Right cardiac atrium (tissue), 5 donors: ENCODE measurements at regions of chr22 and their contacts with region 1.

Region 1: DNA sequence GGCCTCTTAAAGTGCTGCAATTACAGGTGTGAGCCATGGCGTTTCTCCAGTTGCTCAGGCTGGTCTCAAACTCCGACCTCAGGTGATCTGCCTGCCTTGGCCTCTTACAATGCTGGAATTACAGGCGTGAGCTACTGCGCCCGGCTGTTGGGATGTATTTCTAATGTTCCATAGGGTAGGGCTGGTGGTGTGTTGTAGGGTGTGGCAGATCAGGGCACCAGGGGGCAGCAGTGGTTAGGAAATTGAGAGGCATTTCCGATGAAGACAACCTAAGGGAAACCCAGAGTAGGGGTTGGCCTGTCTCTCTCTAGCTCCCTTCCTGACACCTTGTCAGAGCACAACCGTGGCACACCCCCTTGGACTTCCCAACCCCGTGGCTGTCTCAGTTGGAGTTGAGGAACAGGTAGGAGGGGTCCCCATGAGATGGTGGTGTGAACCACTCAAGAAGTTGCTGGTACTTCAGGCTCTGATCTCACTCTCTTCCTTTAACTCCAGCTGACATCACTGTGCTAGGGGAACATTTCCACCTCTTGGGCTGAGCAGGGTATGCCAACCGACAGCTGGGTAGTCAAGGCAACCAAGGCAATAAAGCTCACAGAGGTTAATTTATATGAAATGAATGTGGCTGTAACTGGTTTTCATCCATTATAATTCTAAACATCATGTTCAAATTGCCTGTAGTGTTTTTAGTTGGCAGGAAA is 33.0 kb downstream of the YWHAH start:
- DNase-seq: peak; percentile 70 to 92 (median 85)
- ATAC-seq: peak; percentile 87
- H3K4me3 ChIP-seq: no peak overlapping the region
- H3K27ac ChIP-seq: no peak overlapping the region
- H3K4me1 ChIP-seq: no peaks in the 10 kb centered on the region
- H3K27me3 ChIP-seq: no peaks in the 10 kb centered on the region

Region 2: GRCh38 chr22:31829505-31829904 is 147.8 kb before region 1 on chr22:
- intact Hi-C with region 1: no loop called
- DNase-seq: no peak
- ATAC-seq: peak; percentile 36 to 82
- H3K4me3 ChIP-seq: no peak overlapping the region
- H3K27ac ChIP-seq: no peak overlapping the region
- H3K4me1 ChIP-seq: no peaks in the 10 kb centered on the region
- H3K27me3 ChIP-seq: no peaks in the 10 kb centered on the region

Region 3: DNA sequence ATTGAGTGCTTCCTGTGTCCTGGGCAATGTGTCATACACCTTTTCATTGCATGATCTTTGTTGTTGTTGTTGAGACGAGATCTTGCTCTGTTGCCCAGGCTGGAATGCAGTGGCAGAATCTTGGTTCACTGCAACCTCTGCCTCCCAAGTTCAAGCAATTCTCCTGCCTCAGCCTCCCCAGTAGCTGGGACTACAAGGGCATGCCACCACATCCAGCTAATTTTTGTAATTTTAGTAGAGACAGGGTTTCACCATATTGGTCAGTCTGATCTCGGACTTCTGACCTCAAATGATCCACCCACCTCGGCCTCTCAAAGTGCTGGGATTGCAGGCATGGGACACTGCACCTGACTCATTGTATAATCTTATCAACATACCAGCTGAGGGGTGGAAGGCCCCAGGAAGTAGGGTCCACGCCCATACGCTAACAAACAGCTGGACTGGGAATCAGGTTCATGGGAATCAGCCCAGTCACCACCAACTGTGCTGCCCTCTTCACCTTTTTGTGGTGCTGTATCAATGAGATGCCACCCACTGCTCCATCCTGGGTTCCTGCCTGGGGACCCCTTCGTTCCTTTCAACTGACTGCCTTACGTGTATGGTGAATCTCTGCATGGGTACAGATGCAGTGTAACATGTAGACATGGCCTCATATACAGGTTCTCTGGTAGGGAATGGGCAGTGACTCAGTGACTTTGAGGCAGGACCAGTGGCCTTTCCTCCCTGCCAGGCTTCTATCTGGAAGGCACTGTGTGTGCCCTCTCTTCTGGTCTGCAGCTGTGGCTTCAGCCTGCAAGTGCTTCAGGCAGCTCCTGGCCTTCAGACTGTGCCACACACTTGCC is 65.5 kb before region 1 on chr22:
- intact Hi-C with region 1: no loop called
- DNase-seq: no peak
- ATAC-seq: no peak
- H3K4me3 ChIP-seq: no peak overlapping the region
- H3K27ac ChIP-seq: no peak overlapping the region
- H3K4me1 ChIP-seq: no peaks in the 10 kb centered on the region
- H3K27me3 ChIP-seq: no peaks in the 10 kb centered on the region

Region 4: GRCh38 chr22:31923136-31923535 is 54.2 kb before region 1 on chr22:
- intact Hi-C with region 1: no loop called
- DNase-seq: peak; percentile 47 to 75 (median 73)
- ATAC-seq: peak; percentile 66 to 75
- H3K4me3 ChIP-seq: no peak overlapping the region
- H3K27ac ChIP-seq: no peak overlapping the region
- H3K4me1 ChIP-seq: no peaks in the 10 kb centered on the region
- H3K27me3 ChIP-seq: no peaks in the 10 kb centered on the region

Region 5: DNA sequence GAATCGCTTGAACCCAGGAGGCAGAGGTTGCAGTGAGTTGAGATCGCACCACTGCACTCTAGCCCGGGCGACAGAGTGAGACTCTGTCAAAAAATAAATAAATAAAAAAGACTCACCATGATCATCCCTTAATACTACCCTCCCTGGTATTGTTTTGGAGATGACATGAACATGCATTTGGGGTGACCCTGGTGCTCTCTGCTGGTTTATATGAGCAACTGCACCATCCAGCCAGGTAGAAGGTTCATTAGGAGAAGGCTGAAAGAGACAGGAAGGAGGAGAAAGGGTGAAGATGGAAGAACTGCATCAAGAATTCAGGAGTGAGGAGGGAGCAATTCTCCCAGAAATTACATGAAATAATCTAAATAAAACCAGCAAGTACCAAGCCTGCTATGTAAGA is 103.6 kb after region 1 on chr22:
- intact Hi-C with region 1: loop called (anchors 5 to 10 kb)
- DNase-seq: no peak
- ATAC-seq: peak; percentile 35 to 49
- H3K4me3 ChIP-seq: no peak overlapping the region
- H3K27ac ChIP-seq: no peak overlapping the region
- H3K4me1 ChIP-seq: peaks cover 5% of the 10 kb centered on the region
- H3K27me3 ChIP-seq: no peaks in the 10 kb centered on the region

Region 6: DNA sequence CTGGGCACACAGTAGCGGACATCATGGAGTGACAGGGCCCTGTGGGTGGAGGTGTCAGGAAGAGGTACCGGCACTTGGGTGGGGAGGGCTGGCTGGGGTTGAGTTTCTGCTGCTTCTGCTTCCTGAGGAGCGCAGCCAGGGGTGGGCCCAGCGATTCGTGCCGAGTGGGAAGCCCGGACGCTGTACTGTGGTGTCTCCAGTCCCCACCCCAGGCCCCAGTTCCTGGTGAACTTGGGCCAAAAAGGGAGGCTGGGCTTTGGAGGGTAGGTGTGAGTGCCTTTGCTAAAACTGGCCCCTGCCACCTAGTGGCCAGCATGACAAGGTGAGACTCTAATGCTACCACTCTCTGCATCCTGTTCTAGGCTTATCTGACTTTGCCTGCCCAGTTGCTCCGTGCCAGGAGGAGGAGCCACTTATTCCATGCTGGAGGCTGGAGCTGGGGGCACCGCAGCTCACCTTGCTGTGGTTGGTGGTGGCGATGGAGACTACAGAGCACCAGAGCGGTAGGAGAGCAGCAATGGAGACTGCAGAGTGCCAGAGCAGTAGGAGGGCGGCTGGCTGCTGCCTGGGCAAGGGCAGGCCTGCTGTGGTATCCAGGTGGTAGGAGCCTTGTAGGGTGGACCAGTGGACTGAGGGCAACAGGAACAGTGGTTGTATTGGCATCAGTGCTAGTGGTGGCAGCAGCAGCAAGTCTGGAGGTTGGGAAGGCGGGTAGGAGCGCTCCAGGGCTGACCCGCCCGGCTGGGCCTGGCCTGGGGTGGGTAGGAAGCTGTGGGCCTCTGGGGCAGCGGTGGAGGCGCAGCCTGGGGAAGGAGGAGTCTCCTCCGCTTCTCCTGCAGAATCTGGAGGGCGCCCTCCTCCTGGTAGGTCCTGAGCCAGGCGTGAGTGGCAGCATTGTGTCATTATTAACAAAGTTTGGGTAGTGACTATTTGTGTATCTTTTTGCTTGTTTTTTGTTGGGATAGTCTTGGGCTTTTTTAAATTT is 229.8 kb after region 1 on chr22:
- intact Hi-C with region 1: loop called in 1 of 4 experiments (anchors 5 kb)
- DNase-seq: peak in 1 of 3 donors; percentile 66
- ATAC-seq: peak in 1 of 2 donors; percentile 6
- H3K4me3 ChIP-seq: no peak overlapping the region
- H3K27ac ChIP-seq: no peak overlapping the region
- H3K4me1 ChIP-seq: no peaks in the 10 kb centered on the region
- H3K27me3 ChIP-seq: no peaks in the 10 kb centered on the region